Gastrocnemius medialis (tissue), 4 donors: ENCODE measurements at regions of chr19 and their contacts with region 1.

Region 1: DNA sequence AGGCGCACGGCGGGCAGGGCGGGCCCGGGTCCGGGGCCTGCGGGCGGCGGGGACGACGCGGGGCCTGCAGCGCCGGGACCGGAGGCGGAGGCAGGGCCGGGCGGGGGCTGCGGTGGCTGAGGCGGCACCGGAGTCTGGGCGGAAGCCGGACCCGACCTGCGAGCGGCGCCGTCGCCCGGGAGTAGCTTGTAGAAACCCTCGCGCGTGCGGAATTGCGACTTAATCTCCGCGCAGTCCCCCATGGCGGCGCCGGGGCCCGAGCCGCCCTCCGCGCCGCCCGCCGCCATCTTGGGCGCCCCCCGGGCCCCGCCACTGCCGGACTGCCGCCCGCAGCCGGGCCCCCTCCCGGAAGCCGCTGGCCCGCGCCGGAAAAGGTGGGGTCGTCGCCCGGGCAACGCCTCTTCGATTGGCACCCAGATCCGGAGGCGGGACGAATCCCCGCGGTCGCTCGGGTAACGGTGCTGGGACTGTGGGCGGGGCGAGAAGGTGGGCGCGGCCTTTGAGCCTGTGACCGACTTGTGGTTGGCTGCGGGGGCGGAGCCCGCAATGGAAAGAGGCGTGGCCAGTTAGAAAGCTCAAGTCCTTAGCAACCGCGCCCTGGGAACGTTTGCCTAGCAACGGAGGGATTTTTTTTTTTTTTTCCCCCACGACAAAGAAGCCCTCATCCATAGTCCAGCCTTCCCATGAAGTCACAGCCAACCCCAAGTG is at the start of gene DMWD:
- DNase-seq: peak; percentile 99
- ATAC-seq: peak; percentile 84 to 93
- H3K4me3 ChIP-seq: peak within 1 kb of the TSS; percentile 63 to 69 (median 64)
- H3K27ac ChIP-seq: peak within 1 kb of the TSS; percentile 57 to 84 (median 76)
- H3K4me1 ChIP-seq: peaks cover 30 to 33% of the 10 kb centered on the region in 2 donors
- H3K27me3 ChIP-seq: no peaks in the 10 kb centered on the region
- CTCF ChIP-seq: no peak
- POLR2A ChIP-seq: peak; percentile 84 to 87
- total RNA-seq, gene DMWD: 38.6 to 111 (median 56.4) TPM

Region 2: DNA sequence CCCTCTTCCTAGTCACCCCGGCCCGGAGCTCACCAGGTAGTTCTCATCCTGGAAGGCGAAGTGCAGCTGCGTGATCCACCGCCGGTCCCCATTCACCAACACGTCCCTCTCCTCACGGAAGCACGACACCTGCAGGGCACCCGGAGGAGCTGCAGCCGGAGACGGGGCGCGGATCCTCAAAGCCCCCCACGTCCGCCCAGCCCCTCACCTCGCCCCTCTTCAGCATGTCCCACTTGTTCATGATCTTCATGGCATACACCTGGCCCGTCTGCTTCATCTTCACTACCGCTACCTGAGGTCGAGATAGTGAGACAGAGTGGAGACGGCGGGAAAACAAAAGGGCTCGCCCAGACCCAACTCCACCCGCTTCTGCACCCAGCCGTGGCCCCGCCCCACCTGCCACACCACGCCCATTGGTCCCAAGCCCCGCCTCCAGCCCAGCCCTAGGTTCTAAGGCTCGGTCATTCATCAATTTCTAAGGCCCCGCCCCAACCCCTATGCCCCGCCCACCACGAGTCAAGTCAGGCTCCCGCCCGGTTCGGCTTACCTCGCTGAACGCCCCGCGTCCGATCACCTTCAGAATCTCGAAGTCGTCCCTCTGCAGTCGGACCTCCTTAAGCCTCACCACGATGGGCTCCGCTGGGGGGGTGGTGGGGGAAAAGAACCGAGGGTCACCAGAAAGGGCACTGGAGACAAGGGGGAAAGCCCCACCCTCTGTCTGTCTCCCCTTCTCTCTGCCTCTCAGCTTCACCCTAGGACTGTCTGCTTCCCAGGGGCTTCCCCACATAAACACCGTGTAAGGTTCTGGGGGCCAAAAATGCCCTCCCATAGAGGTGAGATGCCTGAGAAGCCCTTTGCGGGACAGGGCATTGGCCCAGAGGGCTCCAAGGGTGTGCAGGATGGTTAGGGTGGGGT is 13.1 kb before region 1 on chr19:
- in situ Hi-C with region 1: no loop called
- intact Hi-C with region 1: loop called (anchors 1 kb)
- DNase-seq: peak in 1 of 2 donors; percentile 63
- ATAC-seq: no peak
- H3K4me3 ChIP-seq: peak overlapping the region in 1 of 4 donors; percentile 75
- H3K27ac ChIP-seq: peak overlapping the region; percentile 96 to 100 (median 99)
- H3K4me1 ChIP-seq: peaks cover 32 to 52% of the 10 kb centered on the region in 2 donors
- H3K27me3 ChIP-seq: no peaks in the 10 kb centered on the region
- CTCF ChIP-seq: peak in 2 of 5 experiments; percentile 25 to 33
- POLR2A ChIP-seq: no peak

Region 3: GRCh38 chr19:46373421-46374359 is 581.1 kb after region 1 on chr19:
- in situ Hi-C with region 1: no loop called
- intact Hi-C with region 1: no loop called
- DNase-seq: peak in 1 of 2 donors; percentile 61
- ATAC-seq: peak in 1 of 2 donors; percentile 32
- H3K4me3 ChIP-seq: no peak overlapping the region
- H3K27ac ChIP-seq: peak overlapping the region; percentile 46 to 65 (median 55)
- H3K4me1 ChIP-seq: peaks cover 31 to 35% of the 10 kb centered on the region in 2 donors
- H3K27me3 ChIP-seq: no peaks in the 10 kb centered on the region
- CTCF ChIP-seq: no peak
- POLR2A ChIP-seq: no peak